A673 (cell line): ENCODE measurements at regions of chr5 and their contacts with region 1.

Region 1: GRCh38 chr5:68862560-68862959 is 231.3 kb upstream of the SLC30A5 start:
- DNase-seq: no peak
- H3K4me3 ChIP-seq: no peak overlapping the region
- H3K27ac ChIP-seq: no peak overlapping the region
- H3K4me1 ChIP-seq: no peaks in the 10 kb centered on the region
- H3K27me3 ChIP-seq: no peaks in the 10 kb centered on the region
- CTCF ChIP-seq: no peak

Region 2: DNA sequence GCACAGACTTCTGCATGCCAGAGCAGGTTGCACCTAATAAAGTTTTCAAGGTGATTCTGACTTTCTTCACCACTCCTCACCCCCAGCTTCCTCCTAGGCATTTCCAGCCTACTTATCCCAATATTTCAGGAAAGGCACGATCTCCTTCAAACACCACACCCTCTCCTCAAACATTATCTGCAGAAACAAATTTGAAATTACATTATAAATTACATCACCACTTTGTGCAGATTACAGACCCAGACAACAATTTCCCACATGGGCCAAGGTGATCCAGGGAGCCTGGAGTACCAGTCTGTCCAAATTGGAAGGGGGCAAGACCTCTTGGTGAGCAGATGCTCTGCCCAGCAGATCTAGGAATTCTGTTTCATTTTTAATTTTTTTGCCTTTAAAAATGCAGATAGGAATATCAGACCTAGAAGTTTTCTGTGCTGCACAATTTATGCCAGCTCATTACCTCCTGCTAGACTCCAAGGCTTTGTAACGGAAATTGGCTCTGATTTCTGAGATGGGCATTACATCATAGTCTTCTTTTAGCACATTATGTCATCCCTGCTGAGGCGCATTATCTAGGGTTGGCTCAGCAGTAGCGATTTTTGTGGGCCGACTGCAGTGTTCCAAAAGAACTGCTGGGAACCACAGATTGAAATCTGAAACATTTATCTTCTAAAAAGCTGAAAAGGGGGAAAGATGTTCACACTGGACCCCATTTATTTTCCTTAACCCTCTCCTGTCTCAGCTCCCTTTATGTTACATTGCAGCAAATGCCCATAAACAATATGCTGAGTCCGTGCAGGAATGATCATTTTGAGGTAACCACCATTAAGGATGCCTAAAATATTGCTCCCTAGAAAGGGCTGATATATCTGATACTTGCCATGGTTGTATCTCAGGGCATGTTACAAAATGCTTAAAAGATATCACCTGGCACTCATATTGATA is 131.9 kb before region 1 on chr5:
- CTCF ChIA-PET with region 1: no interaction called
- POLR2A ChIA-PET with region 1: no interaction called
- intact Hi-C with region 1: no loop called
- DNase-seq: peak; percentile 90
- H3K4me3 ChIP-seq: no peak overlapping the region
- H3K27ac ChIP-seq: peak overlapping the region; percentile 6
- H3K4me1 ChIP-seq: peaks cover 17% of the 10 kb centered on the region
- H3K27me3 ChIP-seq: no peaks in the 10 kb centered on the region
- CTCF ChIP-seq: no peak

Region 3: DNA sequence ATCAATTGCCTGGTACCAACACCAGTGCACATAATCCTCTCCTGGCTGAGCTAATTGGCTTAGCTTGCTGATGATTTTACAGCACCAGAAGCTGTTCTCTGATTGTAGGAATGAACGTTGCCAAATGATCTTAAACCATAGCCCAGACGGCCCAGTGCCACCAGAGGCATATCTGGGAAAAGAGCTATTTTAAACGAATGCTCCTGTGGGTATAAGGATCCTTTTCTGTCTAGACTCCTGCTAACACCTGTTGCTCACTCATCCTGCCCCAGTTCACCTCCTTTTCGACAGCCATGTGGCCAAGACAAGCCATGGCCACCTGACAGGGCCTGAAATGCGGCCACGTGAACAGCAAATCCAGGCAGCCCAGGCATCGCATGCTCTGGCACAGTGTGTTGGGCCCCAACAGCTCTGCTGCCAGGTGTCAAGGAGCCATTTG is 58.7 kb before region 1 on chr5:
- CTCF ChIA-PET with region 1: no interaction called
- POLR2A ChIA-PET with region 1: no interaction called
- intact Hi-C with region 1: loop called (anchors 10 kb)
- DNase-seq: peak; percentile 12
- H3K4me3 ChIP-seq: no peak overlapping the region
- H3K27ac ChIP-seq: no peak overlapping the region
- H3K4me1 ChIP-seq: no peaks in the 10 kb centered on the region
- H3K27me3 ChIP-seq: no peaks in the 10 kb centered on the region
- CTCF ChIP-seq: no peak

Region 4: GRCh38 chr5:69148586-69149360 is 286.2 kb after region 1 on chr5:
- CTCF ChIA-PET with region 1: no interaction called
- POLR2A ChIA-PET with region 1: no interaction called
- intact Hi-C with region 1: no loop called
- DNase-seq: no peak
- H3K4me3 ChIP-seq: no peak overlapping the region
- H3K27ac ChIP-seq: no peak overlapping the region
- H3K4me1 ChIP-seq: no peaks in the 10 kb centered on the region
- H3K27me3 ChIP-seq: no peaks in the 10 kb centered on the region
- CTCF ChIP-seq: no peak